ENCODE measurements at regions of chr20 and their contacts with region 1.

Region 1: DNA sequence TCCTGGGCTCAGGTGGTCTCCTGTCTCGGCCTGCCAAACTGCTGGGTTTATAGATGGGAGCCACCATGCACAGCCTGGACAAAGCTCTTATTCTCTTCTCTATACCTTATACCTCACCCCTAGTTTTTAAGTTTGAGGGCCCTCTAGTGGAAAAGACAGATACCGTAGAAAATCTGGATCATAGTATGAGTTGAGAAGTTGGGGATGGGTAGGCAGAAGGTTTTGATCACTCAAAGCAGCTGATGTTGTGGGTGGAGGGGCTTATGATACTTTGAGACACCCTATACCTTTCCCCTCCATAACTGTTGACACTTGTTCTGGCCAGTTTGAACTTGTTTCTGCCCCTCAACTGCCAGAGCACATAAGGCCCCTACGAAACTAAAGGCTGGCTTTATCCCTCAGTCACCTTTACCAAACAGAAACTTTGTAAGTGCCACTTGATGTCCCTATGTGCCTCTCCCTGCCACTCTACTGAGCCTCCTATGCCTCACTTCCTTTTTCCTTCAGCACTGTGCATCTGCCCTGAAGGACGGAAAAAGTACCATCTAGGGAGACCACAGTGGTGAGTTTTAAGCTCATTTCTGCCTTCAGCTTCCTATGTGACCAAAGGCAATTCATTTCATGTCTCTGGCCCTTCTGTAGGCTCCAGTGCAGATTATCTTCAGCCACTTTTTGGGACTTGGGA is 28.6 kb downstream of the RALY start:
- DNase-seq: peak; percentile 72
- ATAC-seq: peak; percentile 75
- H3K4me3 ChIP-seq: no peak overlapping the region
- H3K27ac ChIP-seq: no peak overlapping the region
- H3K4me1 ChIP-seq: peaks cover 56% of the 10 kb centered on the region
- H3K27me3 ChIP-seq: no peaks in the 10 kb centered on the region
- CTCF ChIP-seq: peak; percentile 79
- EP300 ChIP-seq: no peak
- POLR2A ChIP-seq: no peak
- RAD21 ChIP-seq: peak; percentile 84

Region 2: GRCh38 chr20:33862709-33863403 is 159.4 kb before region 1 on chr20:
- CTCF ChIA-PET with region 1: interaction called, 6 read pairs
- POLR2A ChIA-PET with region 1: no interaction called
- in situ Hi-C with region 1: no loop called
- intact Hi-C with region 1: loop called (anchors 1 kb)
- DNase-seq: peak; percentile 76
- ATAC-seq: peak; percentile 74
- H3K4me3 ChIP-seq: peak overlapping the region in 2 of 3 experiments; percentile 13 to 59; a peak in 3 of 6 replicates
- H3K27ac ChIP-seq: no peak overlapping the region
- H3K4me1 ChIP-seq: peaks cover 42% of the 10 kb centered on the region
- H3K27me3 ChIP-seq: peaks cover 5 to 40% of the 10 kb centered on the region in 2 experiments
- CTCF ChIP-seq: peak; percentile 87
- EP300 ChIP-seq: no peak
- POLR2A ChIP-seq: no peak
- RAD21 ChIP-seq: peak; percentile 87

Region 3: GRCh38 chr20:33890557-33890956 is 131.7 kb before region 1 on chr20:
- CTCF ChIA-PET with region 1: no interaction called
- POLR2A ChIA-PET with region 1: no interaction called
- in situ Hi-C with region 1: no loop called
- intact Hi-C with region 1: no loop called
- DNase-seq: no peak
- ATAC-seq: no peak
- H3K4me3 ChIP-seq: no peak overlapping the region
- H3K27ac ChIP-seq: no peak overlapping the region
- H3K4me1 ChIP-seq: peaks cover 8% of the 10 kb centered on the region
- H3K27me3 ChIP-seq: peaks cover 3 to 31% of the 10 kb centered on the region in 2 experiments
- CTCF ChIP-seq: no peak
- EP300 ChIP-seq: no peak
- POLR2A ChIP-seq: no peak
- RAD21 ChIP-seq: no peak

Region 4: GRCh38 chr20:33933469-33933909 is 88.8 kb before region 1 on chr20:
- CTCF ChIA-PET with region 1: interaction called, 26 read pairs
- POLR2A ChIA-PET with region 1: interaction called, 4 read pairs
- in situ Hi-C with region 1: loop called (anchors 5 kb)
- intact Hi-C with region 1: loop called (anchors 1 kb)
- DNase-seq: peak; percentile 87
- ATAC-seq: peak; percentile 96
- H3K4me3 ChIP-seq: peak overlapping the region in 1 of 3 experiments; percentile 50; a peak in 1 of 6 replicates
- H3K27ac ChIP-seq: no peak overlapping the region
- H3K4me1 ChIP-seq: peaks cover 19% of the 10 kb centered on the region
- H3K27me3 ChIP-seq: peaks cover 2 to 13% of the 10 kb centered on the region in 2 experiments; a peak in 3 of 5 replicates
- CTCF ChIP-seq: peak; percentile 100
- EP300 ChIP-seq: no peak
- POLR2A ChIP-seq: no peak
- RAD21 ChIP-seq: peak; percentile 99

Region 5: DNA sequence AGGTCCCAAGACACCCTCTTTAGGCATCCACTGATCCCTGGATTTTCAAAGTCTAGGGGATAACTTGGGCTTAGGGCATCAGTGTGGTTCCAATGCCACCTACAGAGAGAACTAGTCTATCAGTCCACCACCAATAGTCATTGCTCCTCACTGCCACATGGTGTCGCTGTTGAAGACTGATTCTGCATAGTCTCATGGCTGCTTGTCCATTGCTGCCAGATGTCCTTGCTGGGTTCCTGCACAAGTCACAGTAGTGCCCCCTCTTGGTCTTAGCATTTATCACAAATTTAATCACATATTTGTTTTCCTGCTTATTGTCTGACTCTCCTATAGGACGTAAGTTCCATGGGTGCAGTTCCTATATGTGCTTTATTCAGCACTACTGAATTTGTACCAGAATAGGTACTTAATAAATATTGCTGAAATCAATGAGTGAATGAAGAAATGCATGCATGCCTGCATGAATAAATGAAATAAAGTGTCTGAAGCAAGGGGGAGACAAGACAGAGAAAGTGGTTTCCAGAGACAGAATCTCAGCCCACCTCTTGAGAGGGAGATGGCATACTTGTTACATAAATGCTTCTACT is 74.5 kb before region 1 on chr20:
- CTCF ChIA-PET with region 1: interaction called, 12 read pairs
- POLR2A ChIA-PET with region 1: no interaction called
- in situ Hi-C with region 1: no loop called
- intact Hi-C with region 1: loop called (anchors 2 kb)
- DNase-seq: peak; percentile 83
- ATAC-seq: peak; percentile 66
- H3K4me3 ChIP-seq: no peak overlapping the region
- H3K27ac ChIP-seq: no peak overlapping the region
- H3K4me1 ChIP-seq: peaks cover 12% of the 10 kb centered on the region; the same call in 1 of the 2 replicates
- H3K27me3 ChIP-seq: peaks cover 0 to 4% of the 10 kb centered on the region in 2 experiments; a peak in 1 of 5 replicates
- CTCF ChIP-seq: peak; percentile 89
- EP300 ChIP-seq: no peak; a peak in 1 of 4 replicates
- POLR2A ChIP-seq: no peak
- RAD21 ChIP-seq: peak; percentile 84